K562 (cell line): ENCODE measurements at regions of chr4 and their contacts with region 1.

Region 1: GRCh38 chr4:174282836-174283506 is 496 bp downstream of the FBXO8 start:
- DNase-seq: peak; percentile 82 to 95 (median 86)
- ATAC-seq: peak; percentile 84
- H3K4me3 ChIP-seq: peak overlapping the region; percentile 65
- H3K27ac ChIP-seq: peak overlapping the region; percentile 100
- H3K4me1 ChIP-seq: peaks cover 0 to 6% of the 10 kb centered on the region in 2 experiments; a peak in 3 of 5 replicates
- H3K27me3 ChIP-seq: no peaks in the 10 kb centered on the region
- CTCF ChIP-seq: no peak
- EP300 ChIP-seq: no peak
- POLR2A ChIP-seq: no peak
- RAD21 ChIP-seq: no peak

Region 2: GRCh38 chr4:174230680-174231079 is 52.3 kb before region 1 on chr4:
- CTCF ChIA-PET with region 1: no interaction called
- POLR2A ChIA-PET with region 1: no interaction called
- in situ Hi-C with region 1: no loop called
- intact Hi-C with region 1: loop called (anchors 5 kb)
- DNase-seq: no peak
- ATAC-seq: no peak
- H3K4me3 ChIP-seq: no peak overlapping the region
- H3K27ac ChIP-seq: no peak overlapping the region
- H3K4me1 ChIP-seq: no peaks in the 10 kb centered on the region
- H3K27me3 ChIP-seq: no peaks in the 10 kb centered on the region
- CTCF ChIP-seq: no peak
- EP300 ChIP-seq: no peak
- POLR2A ChIP-seq: no peak
- RAD21 ChIP-seq: no peak